ENCODE measurements at regions of chr3 and their contacts with region 1.

Region 1: DNA sequence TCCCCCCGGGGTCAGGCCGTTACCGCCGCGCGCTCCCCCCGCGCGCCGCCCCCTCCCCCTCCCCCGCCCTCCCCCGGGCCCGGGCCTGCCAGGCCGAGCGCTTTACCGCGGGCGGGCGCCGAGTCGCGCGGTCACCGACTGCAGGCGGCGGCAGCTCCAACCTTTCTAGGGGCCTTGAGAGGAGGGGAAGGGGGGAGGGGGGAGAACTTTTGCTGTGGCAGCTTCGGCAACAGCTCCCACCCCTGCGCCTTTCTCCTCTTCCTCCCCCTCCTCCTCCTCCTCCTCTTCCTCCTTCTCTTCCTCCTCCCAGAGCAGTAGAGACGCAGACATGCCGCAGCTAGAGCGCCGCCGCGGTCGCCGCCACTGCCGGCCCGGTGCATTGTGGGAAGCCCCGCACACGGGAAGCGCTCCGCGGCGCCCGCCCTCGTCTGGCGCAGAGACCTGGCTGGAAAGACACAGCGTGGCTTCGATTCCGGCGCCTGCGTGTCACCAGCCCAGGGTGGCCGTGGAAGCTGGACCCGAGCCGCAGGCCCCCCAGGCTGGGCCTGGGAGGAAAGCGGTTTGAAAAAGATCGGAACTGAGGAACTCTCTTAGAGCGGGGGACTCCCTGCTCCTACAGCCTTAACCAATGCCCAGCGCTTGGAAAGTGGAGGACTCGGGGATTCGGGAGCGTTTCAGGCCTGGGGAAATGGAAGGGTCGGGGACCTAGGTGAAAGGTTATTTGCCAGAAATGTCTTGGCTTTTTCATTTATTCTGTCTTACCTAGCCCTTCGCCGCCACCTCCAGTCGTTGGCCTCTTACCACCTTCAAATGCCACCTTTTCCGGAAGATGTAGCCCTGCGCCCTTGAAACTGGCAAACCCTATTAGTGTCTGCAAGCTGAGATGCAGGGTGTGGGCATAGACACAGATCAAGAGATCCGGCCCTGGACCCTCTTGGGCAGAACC is at the start of gene ZNF148:
- DNase-seq: peak; percentile 97
- H3K4me3 ChIP-seq: peak within 1 kb of the TSS; percentile 72 to 97 (median 92)
- H3K27ac ChIP-seq: peak within 1 kb of the TSS; percentile 89 to 96 (median 93)
- H3K4me1 ChIP-seq: peaks cover 19 to 51% (median 36%) of the 10 kb centered on the region in 4 donors
- H3K27me3 ChIP-seq: no peaks in the 10 kb centered on the region
- CTCF ChIP-seq: peak in 2 of 3 experiments; percentile 3 to 17
- EP300 ChIP-seq: no peak
- POLR2A ChIP-seq: peak; percentile 61
- total RNA-seq, gene ZNF148: 30.3 to 39.0 (median 33.0) TPM

Region 2: GRCh38 chr3:125055913-125056745 is 319.1 kb before region 1 on chr3 and contains the start of gene HEG1:
- intact Hi-C with region 1: loop called (anchors 10 kb)
- DNase-seq: peak; percentile 97
- H3K4me3 ChIP-seq: peak within 1 kb of the TSS; percentile 80 to 86 (median 84)
- H3K27ac ChIP-seq: peak within 1 kb of the TSS; percentile 95 to 96 (median 96)
- H3K4me1 ChIP-seq: peaks cover 67 to 73% (median 71%) of the 10 kb centered on the region in 4 donors
- H3K27me3 ChIP-seq: no peaks in the 10 kb centered on the region
- CTCF ChIP-seq: no peak
- EP300 ChIP-seq: no peak
- POLR2A ChIP-seq: peak; percentile 23
- total RNA-seq, gene HEG1: 47.8 to 91.7 (median 76.8) TPM

Region 3: GRCh38 chr3:125087768-125088391 is 287.4 kb before region 1 on chr3:
- intact Hi-C with region 1: no loop called
- DNase-seq: no peak
- H3K4me3 ChIP-seq: no peak overlapping the region
- H3K27ac ChIP-seq: no peak overlapping the region
- H3K4me1 ChIP-seq: peaks cover 0 to 7% (median 0%) of the 10 kb centered on the region in 4 donors
- H3K27me3 ChIP-seq: no peaks in the 10 kb centered on the region
- CTCF ChIP-seq: no peak
- EP300 ChIP-seq: no peak
- POLR2A ChIP-seq: no peak

Measured in esophagus muscularis mucosa (tissue), 4 donors.